Activated T-helper 1 cell treated with anti-CD3 and anti-CD28 coated beads, Interleukin-12 subunit alpha, Interleukin-12 subunit beta, Interleukin-2, Interleukin-4 antibody, amounts not matched to agents 30 ng/mL and 10 ng/mL and 1 ng/mL, durations not matched to agents 14 hours and 24 hours and 36 hours (primary cell): ENCODE measurements at regions of chr10 and their contacts with region 1.

Region 1: GRCh38 chr10:124447741-124448466 is 1.9 kb downstream of the NKX1-2 start:
- DNase-seq: no peak
- H3K4me3 Mint-ChIP-seq: no peak overlapping the region
- H3K27ac Mint-ChIP-seq: no peak overlapping the region
- H3K4me1 Mint-ChIP-seq: peaks cover 6% of the 10 kb centered on the region
- H3K27me3 Mint-ChIP-seq: peaks cover 78% of the 10 kb centered on the region

Region 2: GRCh38 chr10:123139521-123140163 is 1308.3 kb before region 1 on chr10:
- intact Hi-C with region 1: loop called (anchors 5 kb)
- DNase-seq: no peak
- H3K4me3 Mint-ChIP-seq: peak overlapping the region; percentile 3
- H3K27ac Mint-ChIP-seq: peak overlapping the region; percentile 25
- H3K4me1 Mint-ChIP-seq: peaks cover 10% of the 10 kb centered on the region
- H3K27me3 Mint-ChIP-seq: peaks cover 73% of the 10 kb centered on the region

Region 3: GRCh38 chr10:124511205-124512039 is 63.5 kb after region 1 on chr10:
- intact Hi-C with region 1: no loop called
- DNase-seq: no peak
- H3K4me3 Mint-ChIP-seq: no peak overlapping the region
- H3K27ac Mint-ChIP-seq: no peak overlapping the region
- H3K4me1 Mint-ChIP-seq: no peaks in the 10 kb centered on the region
- H3K27me3 Mint-ChIP-seq: no peaks in the 10 kb centered on the region

Region 4: GRCh38 chr10:124522933-124523871 is 75.3 kb after region 1 on chr10:
- intact Hi-C with region 1: no loop called
- DNase-seq: no peak
- H3K4me3 Mint-ChIP-seq: no peak overlapping the region
- H3K27ac Mint-ChIP-seq: no peak overlapping the region
- H3K4me1 Mint-ChIP-seq: no peaks in the 10 kb centered on the region
- H3K27me3 Mint-ChIP-seq: no peaks in the 10 kb centered on the region

Region 5: GRCh38 chr10:125431149-125431548 is 983.2 kb after region 1 on chr10:
- intact Hi-C with region 1: no loop called
- DNase-seq: no peak
- H3K4me3 Mint-ChIP-seq: no peak overlapping the region
- H3K27ac Mint-ChIP-seq: no peak overlapping the region
- H3K4me1 Mint-ChIP-seq: no peaks in the 10 kb centered on the region
- H3K27me3 Mint-ChIP-seq: no peaks in the 10 kb centered on the region